ENCODE measurements at regions of chr12 and their contacts with region 1.

Region 1: GRCh38 chr12:8687846-8688601 is 9.8 kb upstream of the RIMKLB start:
- DNase-seq: peak; percentile 59 to 84
- H3K4me3 ChIP-seq: no peak overlapping the region
- H3K27ac ChIP-seq: peak overlapping the region; percentile 59 to 62
- H3K4me1 ChIP-seq: peaks cover 0 to 30% (median 19%) of the 10 kb centered on the region in 4 donors
- H3K27me3 ChIP-seq: no peaks in the 10 kb centered on the region
- CTCF ChIP-seq: no peak

Region 2: DNA sequence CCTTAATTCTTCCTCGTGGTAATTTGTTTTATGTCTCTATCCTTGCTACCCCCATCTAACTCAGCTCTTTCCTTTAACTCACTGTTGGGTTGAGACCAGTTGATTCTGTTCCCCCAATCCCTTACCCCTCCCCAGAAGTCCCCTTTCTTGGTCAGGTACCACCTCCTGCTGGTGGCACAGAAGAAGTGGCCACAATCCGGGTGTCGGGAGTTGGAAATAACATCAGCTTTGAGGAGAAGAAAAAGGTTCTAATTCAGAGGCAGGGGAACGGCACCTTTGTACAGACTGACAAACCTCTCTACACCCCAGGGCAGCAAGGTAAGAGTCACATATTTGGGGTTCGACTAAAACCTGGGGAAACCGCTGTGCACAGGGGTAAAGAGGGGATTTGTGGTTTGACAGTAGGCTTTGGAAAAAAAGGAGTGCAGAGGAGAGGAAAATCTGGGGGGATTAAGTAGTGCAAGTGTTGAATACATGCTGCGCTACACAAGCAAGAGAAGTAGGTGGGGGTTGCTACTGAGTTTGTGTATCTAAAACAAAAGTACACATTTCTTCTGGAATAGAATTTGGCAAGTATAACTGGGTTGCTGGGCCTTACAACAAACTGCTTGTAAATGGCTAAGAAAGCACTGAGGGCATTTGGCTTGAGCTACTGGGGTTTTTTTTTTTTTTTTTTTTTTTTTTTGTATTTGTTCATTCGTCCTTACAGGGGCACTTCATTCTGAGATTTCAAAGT is 135.7 kb after region 1 on chr12:
- intact Hi-C with region 1: loop called (anchors 2 kb)
- DNase-seq: no peak
- H3K4me3 ChIP-seq: no peak overlapping the region
- H3K27ac ChIP-seq: no peak overlapping the region
- H3K4me1 ChIP-seq: peaks cover 0 to 7% (median 0%) of the 10 kb centered on the region in 4 donors
- H3K27me3 ChIP-seq: no peaks in the 10 kb centered on the region
- CTCF ChIP-seq: peak; percentile 77 to 78

Region 3: DNA sequence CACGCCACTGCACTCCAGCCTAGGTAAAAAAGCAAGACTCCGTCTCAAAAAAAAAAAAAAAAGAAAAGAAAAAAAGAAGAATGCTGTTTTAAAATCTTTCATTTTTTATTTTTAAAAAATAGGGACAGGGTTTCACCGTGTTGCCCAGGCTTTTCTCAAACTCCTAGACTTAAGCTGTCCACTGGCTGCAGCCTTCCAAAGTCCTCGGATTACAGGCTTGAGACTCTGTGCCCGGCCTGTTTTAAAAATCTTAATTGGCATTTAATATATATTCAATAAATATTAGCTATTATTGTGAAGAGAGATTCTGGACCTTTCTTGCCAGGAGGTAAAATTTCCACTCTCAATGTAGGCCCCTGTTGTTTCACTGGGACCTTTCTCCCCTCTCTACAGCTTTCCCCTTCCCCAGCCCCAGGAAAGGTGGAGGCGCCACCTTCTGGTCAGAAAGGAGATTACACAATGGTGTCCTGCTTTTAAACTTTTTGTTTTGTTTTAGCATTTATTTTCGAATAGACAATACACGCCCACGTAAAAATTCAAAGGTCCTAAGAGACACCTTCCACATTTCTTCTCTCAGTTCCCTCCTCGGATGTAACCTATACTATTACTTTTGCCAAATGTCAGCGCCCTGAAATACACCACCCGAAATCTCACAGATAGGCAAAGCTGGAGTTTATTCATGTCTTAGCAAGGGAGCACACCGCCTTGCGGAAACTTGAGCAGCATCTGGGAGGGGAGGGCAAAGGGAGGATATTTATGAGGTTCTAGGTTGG is 202.5 kb after region 1 on chr12:
- intact Hi-C with region 1: no loop called
- DNase-seq: peak in 1 of 2 donors; percentile 42
- H3K4me3 ChIP-seq: peak overlapping the region; percentile 49 to 52
- H3K27ac ChIP-seq: peak overlapping the region; percentile 7 to 31
- H3K4me1 ChIP-seq: no peaks in the 10 kb centered on the region
- H3K27me3 ChIP-seq: no peaks in the 10 kb centered on the region
- CTCF ChIP-seq: peak; percentile 81 to 87

Measured in tibial artery (tissue), 4 donors.